ENCODE measurements at regions of chr2 and their contacts with region 1.

Region 1: GRCh38 chr2:54763636-54764291 is 40.3 kb downstream of the EML6 start:
- DNase-seq: peak; percentile 64
- ATAC-seq: peak; percentile 34
- H3K4me3 Mint-ChIP-seq: no peak overlapping the region
- H3K27ac Mint-ChIP-seq: no peak overlapping the region
- H3K4me1 Mint-ChIP-seq: peaks cover 13% of the 10 kb centered on the region
- H3K27me3 Mint-ChIP-seq: peaks cover 2% of the 10 kb centered on the region

Region 2: DNA sequence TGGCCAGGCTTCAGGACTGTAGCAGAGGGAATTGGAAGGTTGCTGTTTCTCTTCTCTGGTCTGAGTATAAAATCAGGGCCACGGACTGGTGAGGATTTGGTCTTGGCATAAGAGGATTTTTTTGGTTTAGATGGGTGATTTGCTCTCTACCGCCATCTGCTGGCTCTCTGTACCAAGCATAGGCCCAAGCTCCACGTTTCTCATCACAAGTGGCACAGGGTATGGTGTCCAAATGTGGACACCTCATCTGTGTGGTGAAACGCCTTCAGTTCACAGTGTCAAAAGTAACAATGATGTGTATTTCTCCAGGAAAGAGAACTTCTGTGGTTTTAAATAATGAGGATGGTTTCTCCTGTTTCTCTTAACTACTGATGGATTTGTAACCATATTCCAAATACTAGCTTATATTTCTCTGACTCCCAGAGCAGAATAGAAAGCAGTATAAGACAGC is 74.8 kb after region 1 on chr2:
- CTCF ChIA-PET with region 1: interaction called, 7 read pairs
- POLR2A ChIA-PET with region 1: no interaction called
- intact Hi-C with region 1: loop called (anchors 1 to 5 kb)
- DNase-seq: peak; percentile 79
- ATAC-seq: peak; percentile 97
- H3K4me3 Mint-ChIP-seq: no peak overlapping the region
- H3K27ac Mint-ChIP-seq: no peak overlapping the region
- H3K4me1 Mint-ChIP-seq: no peaks in the 10 kb centered on the region
- H3K27me3 Mint-ChIP-seq: no peaks in the 10 kb centered on the region

Measured in activated CD4-positive, alpha-beta T cell treated with anti-CD3 and anti-CD28 coated beads for 36 hours (primary cell).